ENCODE measurements at regions of chrX and their contacts with region 1.

Region 1: DNA sequence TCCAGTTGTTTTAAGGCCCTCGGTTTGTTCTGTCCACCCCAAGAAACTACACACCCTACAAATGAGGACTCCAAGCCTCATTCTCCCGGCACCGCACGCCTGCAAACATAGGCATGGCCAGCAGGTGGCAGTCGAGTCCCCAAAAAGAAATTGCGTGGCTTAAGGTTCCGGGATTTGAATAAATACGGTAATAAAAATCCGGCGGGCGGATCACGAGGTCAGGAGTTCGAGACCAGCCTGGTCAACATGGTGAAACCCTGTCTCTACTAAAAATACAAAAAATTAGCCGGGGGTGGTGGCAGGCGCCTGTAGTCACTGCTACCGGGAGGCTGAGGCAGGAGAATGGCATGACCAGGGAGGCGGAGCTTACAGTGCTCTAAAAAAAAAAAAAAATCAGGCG is 21.8 kb upstream of the CSF2RA start:
- DNase-seq: peak; percentile 69 to 79
- H3K4me3 ChIP-seq: no peak overlapping the region
- H3K27ac ChIP-seq: no peak overlapping the region
- H3K4me1 ChIP-seq: peaks cover 26% of the 10 kb centered on the region
- H3K27me3 ChIP-seq: no peaks in the 10 kb centered on the region
- CTCF ChIP-seq: peak; percentile 95

Region 2: GRCh38 chrX:1205680-1206611 is 40.9 kb before region 1 on chrX:
- CTCF ChIA-PET with region 1: no interaction called
- POLR2A ChIA-PET with region 1: no interaction called
- intact Hi-C with region 1: loop called (anchors 1 kb)
- DNase-seq: peak; percentile 47 to 93
- H3K4me3 ChIP-seq: peak overlapping the region; percentile 42; the same call in 1 of the 2 replicates
- H3K27ac ChIP-seq: peak overlapping the region; percentile 35; the same call in 1 of the 2 replicates
- H3K4me1 ChIP-seq: peaks cover 29% of the 10 kb centered on the region
- H3K27me3 ChIP-seq: no peaks in the 10 kb centered on the region
- CTCF ChIP-seq: no peak

Region 3: GRCh38 chrX:1274786-1275185 is 28.0 kb after region 1 on chrX:
- CTCF ChIA-PET with region 1: no interaction called
- POLR2A ChIA-PET with region 1: no interaction called
- intact Hi-C with region 1: loop called (anchors 2 kb)
- DNase-seq: no peak
- H3K4me3 ChIP-seq: no peak overlapping the region
- H3K27ac ChIP-seq: no peak overlapping the region
- H3K4me1 ChIP-seq: no peaks in the 10 kb centered on the region
- H3K27me3 ChIP-seq: no peaks in the 10 kb centered on the region
- CTCF ChIP-seq: no peak

Region 4: GRCh38 chrX:1323315-1323714 is 76.5 kb after region 1 on chrX:
- CTCF ChIA-PET with region 1: no interaction called
- POLR2A ChIA-PET with region 1: no interaction called
- intact Hi-C with region 1: loop called (anchors 5 kb)
- DNase-seq: peak; percentile 55 to 67
- H3K4me3 ChIP-seq: no peak overlapping the region
- H3K27ac ChIP-seq: no peak overlapping the region
- H3K4me1 ChIP-seq: no peaks in the 10 kb centered on the region
- H3K27me3 ChIP-seq: no peaks in the 10 kb centered on the region
- CTCF ChIP-seq: peak; percentile 67

Region 5: GRCh38 chrX:1391707-1392375 is 145.0 kb after region 1 on chrX and contains the start of gene SLC25A6:
- CTCF ChIA-PET with region 1: no interaction called
- POLR2A ChIA-PET with region 1: no interaction called
- intact Hi-C with region 1: loop called (anchors 5 kb)
- DNase-seq: peak; percentile 89 to 97
- H3K4me3 ChIP-seq: peak within 1 kb of the TSS; percentile 100
- H3K27ac ChIP-seq: peak within 1 kb of the TSS; percentile 93
- H3K4me1 ChIP-seq: peaks cover 9% of the 10 kb centered on the region
- H3K27me3 ChIP-seq: no peaks in the 10 kb centered on the region
- CTCF ChIP-seq: peak; percentile 48; the same call in 1 of the 2 replicates
- total RNA-seq, gene SLC25A6: 178 and 212 TPM in 2 replicates

Region 6: GRCh38 chrX:1453951-1454785 is 207.4 kb after region 1 on chrX:
- CTCF ChIA-PET with region 1: no interaction called
- POLR2A ChIA-PET with region 1: no interaction called
- intact Hi-C with region 1: loop called (anchors 2 kb)
- DNase-seq: peak; percentile 53 to 73
- H3K4me3 ChIP-seq: no peak overlapping the region
- H3K27ac ChIP-seq: no peak overlapping the region
- H3K4me1 ChIP-seq: no peaks in the 10 kb centered on the region
- H3K27me3 ChIP-seq: peaks cover 20% of the 10 kb centered on the region
- CTCF ChIP-seq: peak; percentile 92